ENCODE measurements at regions of chr15 and their contacts with region 1.

Region 1: GRCh38 chr15:64355944-64356709 is at the start of gene CSNK1G1:
- DNase-seq: peak; percentile 93
- ATAC-seq: peak; percentile 96
- H3K4me3 ChIP-seq: peak within 1 kb of the TSS; percentile 85
- H3K27ac ChIP-seq: peak within 1 kb of the TSS; percentile 50
- H3K4me1 ChIP-seq: peaks cover 5% of the 10 kb centered on the region; the same call in 1 of the 2 replicates
- H3K27me3 ChIP-seq: no peaks in the 10 kb centered on the region
- CTCF ChIP-seq: peak; percentile 66
- total RNA-seq, gene CSNK1G1: 7.8 and 9.8 TPM in 2 replicates

Region 2: DNA sequence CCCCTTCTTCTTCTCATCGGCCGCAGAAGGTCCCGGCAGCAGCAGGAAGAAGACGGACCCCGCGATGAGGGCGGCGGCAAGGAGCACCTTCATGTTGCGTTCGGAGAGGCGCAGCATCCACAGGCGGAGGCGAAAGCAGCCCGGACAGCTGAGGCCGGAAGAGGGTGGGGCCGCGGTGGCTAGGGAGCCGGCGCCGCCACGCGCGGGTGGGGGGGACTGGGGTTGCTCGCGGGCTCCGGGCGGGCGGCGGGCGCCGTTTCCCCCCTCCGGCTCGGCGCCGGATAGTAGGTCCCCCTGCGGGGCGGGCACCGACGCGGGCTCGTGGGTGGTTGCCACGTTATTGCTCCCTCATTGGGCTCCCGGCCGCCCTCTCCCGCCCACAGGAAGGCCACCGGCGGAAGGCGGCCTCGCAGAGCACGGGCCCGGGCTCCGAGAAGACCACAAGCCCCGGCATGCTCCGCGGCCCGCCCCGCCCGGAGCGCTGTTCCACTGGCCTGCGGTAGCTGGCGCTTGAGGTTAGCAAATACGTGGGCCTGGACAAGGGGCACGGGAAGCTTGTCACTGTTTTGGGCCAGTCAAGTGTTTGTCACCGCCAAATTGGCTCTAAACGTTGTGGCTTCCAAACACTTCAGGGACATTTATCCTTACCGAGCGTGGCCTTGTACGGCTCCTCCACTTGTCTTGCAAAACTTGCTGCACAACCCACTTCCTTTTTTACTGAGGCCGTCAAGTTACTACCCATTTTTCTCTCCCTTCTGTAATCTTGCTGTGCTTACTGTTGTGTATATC is 193.1 kb before region 1 on chr15 and contains the start of gene PPIB:
- CTCF ChIA-PET with region 1: no interaction called
- POLR2A ChIA-PET with region 1: no interaction called
- intact Hi-C with region 1: loop called (anchors 1 kb)
- DNase-seq: peak; percentile 95
- ATAC-seq: peak; percentile 95
- H3K4me3 ChIP-seq: peak within 1 kb of the TSS; percentile 86
- H3K27ac ChIP-seq: peak within 1 kb of the TSS; percentile 56
- H3K4me1 ChIP-seq: peaks cover 11% of the 10 kb centered on the region
- H3K27me3 ChIP-seq: no peaks in the 10 kb centered on the region
- CTCF ChIP-seq: peak; percentile 48
- total RNA-seq, gene PPIB: 410 and 450 TPM in 2 replicates

Region 3: DNA sequence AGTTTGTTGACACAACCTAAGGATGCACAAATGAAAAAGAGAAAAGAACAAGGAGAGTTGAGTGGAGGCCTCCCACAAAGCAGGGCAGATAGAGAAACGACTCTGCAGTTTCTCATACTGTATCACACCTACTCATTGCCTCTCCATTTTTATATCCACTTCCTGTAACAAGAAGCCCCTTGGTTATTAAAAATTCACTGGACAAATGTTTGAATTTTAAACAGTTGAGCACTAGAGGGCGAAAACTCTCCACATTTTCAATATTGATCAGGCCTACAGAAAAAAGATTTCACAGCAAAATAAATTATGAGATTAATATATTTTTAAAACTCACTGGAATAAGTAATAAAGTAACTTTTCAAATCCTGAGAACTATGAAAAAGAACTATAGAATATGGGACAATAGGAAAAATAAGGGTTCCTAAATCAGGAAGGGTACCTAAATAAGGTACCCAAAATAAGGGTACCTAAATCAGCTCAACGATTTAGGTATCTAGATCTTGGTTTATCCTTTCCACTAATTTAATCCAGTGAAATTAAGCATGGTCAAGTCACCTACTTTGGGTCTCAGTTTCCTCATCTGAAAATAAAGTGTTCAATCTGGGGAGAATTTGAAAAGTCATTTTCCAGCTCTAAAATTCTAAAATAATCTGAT is 146.3 kb before region 1 on chr15:
- CTCF ChIA-PET with region 1: no interaction called
- POLR2A ChIA-PET with region 1: no interaction called
- intact Hi-C with region 1: loop called (anchors 1 kb)
- DNase-seq: peak; percentile 68
- ATAC-seq: peak; percentile 54
- H3K4me3 ChIP-seq: no peak overlapping the region
- H3K27ac ChIP-seq: no peak overlapping the region
- H3K4me1 ChIP-seq: peaks cover 11% of the 10 kb centered on the region; the same call in 1 of the 2 replicates
- H3K27me3 ChIP-seq: no peaks in the 10 kb centered on the region
- CTCF ChIP-seq: peak; percentile 67

Region 4: GRCh38 chr15:64247906-64248541 is 108.1 kb before region 1 on chr15:
- CTCF ChIA-PET with region 1: interaction called, 4 read pairs
- POLR2A ChIA-PET with region 1: no interaction called
- intact Hi-C with region 1: loop called (anchors 2 kb)
- DNase-seq: peak; percentile 87
- ATAC-seq: peak; percentile 56
- H3K4me3 ChIP-seq: peak overlapping the region; percentile 49; the same call in 1 of the 2 replicates
- H3K27ac ChIP-seq: peak overlapping the region; percentile 95
- H3K4me1 ChIP-seq: peaks cover 51% of the 10 kb centered on the region
- H3K27me3 ChIP-seq: no peaks in the 10 kb centered on the region
- CTCF ChIP-seq: no peak

Region 5: GRCh38 chr15:64288608-64289398 is 67.3 kb before region 1 on chr15:
- CTCF ChIA-PET with region 1: no interaction called
- POLR2A ChIA-PET with region 1: interaction called, 3 read pairs
- intact Hi-C with region 1: loop called (anchors 2 kb)
- DNase-seq: peak; percentile 59
- ATAC-seq: peak; percentile 69
- H3K4me3 ChIP-seq: no peak overlapping the region
- H3K27ac ChIP-seq: no peak overlapping the region
- H3K4me1 ChIP-seq: peaks cover 13% of the 10 kb centered on the region
- H3K27me3 ChIP-seq: no peaks in the 10 kb centered on the region
- CTCF ChIP-seq: no peak

Region 6: GRCh38 chr15:64622410-64623260 is 266.5 kb after region 1 on chr15:
- CTCF ChIA-PET with region 1: no interaction called
- POLR2A ChIA-PET with region 1: no interaction called
- intact Hi-C with region 1: no loop called
- DNase-seq: no peak
- ATAC-seq: no peak
- H3K4me3 ChIP-seq: no peak overlapping the region
- H3K27ac ChIP-seq: no peak overlapping the region
- H3K4me1 ChIP-seq: peaks cover 22% of the 10 kb centered on the region
- H3K27me3 ChIP-seq: no peaks in the 10 kb centered on the region
- CTCF ChIP-seq: no peak

Measured in PC-3 (cell line).